ENCODE measurements at regions of chrX and their contacts with region 1.

Region 1: GRCh38 chrX:109398833-109399232 is 83.1 kb downstream of the GUCY2F start:
- DNase-seq: no peak
- ATAC-seq: no peak
- H3K4me3 ChIP-seq: no peak overlapping the region
- H3K4me3 Mint-ChIP-seq: no peak overlapping the region
- H3K27ac ChIP-seq: no peak overlapping the region
- H3K27ac Mint-ChIP-seq: no peak overlapping the region
- H3K4me1 ChIP-seq: no peaks in the 10 kb centered on the region
- H3K4me1 Mint-ChIP-seq: no peaks in the 10 kb centered on the region
- H3K27me3 ChIP-seq: no peaks in the 10 kb centered on the region
- H3K27me3 Mint-ChIP-seq: no peaks in the 10 kb centered on the region
- CTCF ChIP-seq: no peak

Region 2: DNA sequence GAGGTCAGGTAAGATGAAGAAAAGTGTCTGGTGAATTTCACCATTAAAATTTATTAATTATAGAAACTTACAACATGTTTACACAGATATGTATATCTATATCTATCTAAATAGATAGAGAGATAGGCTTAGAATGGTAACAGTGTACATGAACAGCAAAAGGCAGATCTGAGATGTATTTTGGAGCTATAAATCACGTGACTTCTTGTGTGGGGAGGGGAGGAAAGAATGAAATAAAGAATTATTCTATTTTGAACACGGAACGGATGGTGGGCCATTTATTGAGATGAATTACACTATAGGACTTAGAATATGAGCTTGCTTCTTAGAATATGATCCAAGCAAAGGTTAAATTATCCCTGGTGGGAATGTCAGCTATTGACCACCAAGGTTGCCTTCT is 13.2 kb after region 1 on chrX:
- CTCF ChIA-PET with region 1: no interaction called
- POLR2A ChIA-PET with region 1: no interaction called
- intact Hi-C with region 1: no loop called
- DNase-seq: no peak
- ATAC-seq: no peak
- H3K4me3 ChIP-seq: no peak overlapping the region
- H3K4me3 Mint-ChIP-seq: no peak overlapping the region
- H3K27ac ChIP-seq: no peak overlapping the region
- H3K27ac Mint-ChIP-seq: no peak overlapping the region
- H3K4me1 ChIP-seq: no peaks in the 10 kb centered on the region
- H3K4me1 Mint-ChIP-seq: no peaks in the 10 kb centered on the region
- H3K27me3 ChIP-seq: no peaks in the 10 kb centered on the region
- H3K27me3 Mint-ChIP-seq: peaks cover 6% of the 10 kb centered on the region
- CTCF ChIP-seq: no peak

Region 3: GRCh38 chrX:110723844-110724243 is 1325.0 kb after region 1 on chrX:
- CTCF ChIA-PET with region 1: no interaction called
- POLR2A ChIA-PET with region 1: no interaction called
- intact Hi-C with region 1: loop called in 1 of 2 experiments (anchors 5 kb)
- DNase-seq: no peak
- ATAC-seq: no peak
- H3K4me3 ChIP-seq: no peak overlapping the region
- H3K4me3 Mint-ChIP-seq: no peak overlapping the region
- H3K27ac ChIP-seq: no peak overlapping the region
- H3K27ac Mint-ChIP-seq: no peak overlapping the region
- H3K4me1 ChIP-seq: no peaks in the 10 kb centered on the region
- H3K4me1 Mint-ChIP-seq: no peaks in the 10 kb centered on the region
- H3K27me3 ChIP-seq: no peaks in the 10 kb centered on the region
- H3K27me3 Mint-ChIP-seq: no peaks in the 10 kb centered on the region
- CTCF ChIP-seq: no peak